T-cell (primary cell): ENCODE measurements at regions of chr13 and their contacts with region 1.

Region 1: GRCh38 chr13:77374786-77375185 is 47.9 kb upstream of the MYCBP2 start:
- DNase-seq: no peak
- ATAC-seq: no peak
- H3K4me3 ChIP-seq: no peak overlapping the region
- H3K4me3 Mint-ChIP-seq: no peak overlapping the region
- H3K27ac ChIP-seq: no peak overlapping the region
- H3K27ac Mint-ChIP-seq: no peak overlapping the region
- H3K4me1 ChIP-seq: no peaks in the 10 kb centered on the region
- H3K4me1 Mint-ChIP-seq: peaks cover 0 to 5% (median 4%) of the 10 kb centered on the region in 3 donors
- H3K27me3 ChIP-seq: no peaks in the 10 kb centered on the region
- H3K27me3 Mint-ChIP-seq: no peaks in the 10 kb centered on the region

Region 2: DNA sequence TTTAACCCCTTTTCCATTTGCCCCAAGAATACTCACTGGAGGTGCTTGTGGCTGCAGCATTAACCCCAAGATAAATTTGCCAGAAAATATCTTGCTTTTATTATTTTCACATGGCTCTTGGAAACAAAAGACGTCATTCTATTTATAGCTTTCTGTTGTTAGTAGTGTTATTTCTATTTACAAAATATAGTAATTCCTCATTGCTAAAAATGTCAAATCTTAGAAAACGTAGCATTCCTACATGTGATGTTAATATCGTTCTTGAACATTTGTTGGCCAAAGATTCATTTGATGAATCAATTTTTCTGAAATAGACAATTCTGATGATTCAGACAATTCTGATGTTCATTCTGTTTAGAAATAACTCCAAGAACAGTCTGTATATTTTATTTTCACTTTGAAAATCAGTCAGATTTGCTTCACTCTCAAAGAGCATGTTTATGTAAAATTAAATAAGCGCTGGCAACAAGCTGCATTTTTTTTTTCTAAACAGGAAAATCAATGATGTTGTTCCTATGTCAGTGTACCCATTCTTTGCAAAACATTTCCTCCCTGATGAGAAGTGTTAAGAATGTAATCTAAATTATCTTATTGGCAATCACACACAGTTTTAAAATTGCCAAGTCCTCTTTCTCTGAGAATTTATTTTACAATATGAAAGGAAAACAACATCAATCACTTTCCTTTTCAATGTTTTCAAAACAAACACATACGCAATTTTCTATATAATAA is 822.6 kb before region 1 on chr13:
- CTCF ChIA-PET with region 1: no interaction called
- POLR2A ChIA-PET with region 1: no interaction called
- DNase-seq: no peak
- ATAC-seq: no peak
- H3K4me3 ChIP-seq: no peak overlapping the region
- H3K4me3 Mint-ChIP-seq: no peak overlapping the region
- H3K27ac ChIP-seq: no peak overlapping the region
- H3K27ac Mint-ChIP-seq: no peak overlapping the region
- H3K4me1 ChIP-seq: no peaks in the 10 kb centered on the region
- H3K4me1 Mint-ChIP-seq: no peaks in the 10 kb centered on the region
- H3K27me3 ChIP-seq: no peaks in the 10 kb centered on the region
- H3K27me3 Mint-ChIP-seq: peaks cover 3 to 6% of the 10 kb centered on the region in 2 donors

Region 3: DNA sequence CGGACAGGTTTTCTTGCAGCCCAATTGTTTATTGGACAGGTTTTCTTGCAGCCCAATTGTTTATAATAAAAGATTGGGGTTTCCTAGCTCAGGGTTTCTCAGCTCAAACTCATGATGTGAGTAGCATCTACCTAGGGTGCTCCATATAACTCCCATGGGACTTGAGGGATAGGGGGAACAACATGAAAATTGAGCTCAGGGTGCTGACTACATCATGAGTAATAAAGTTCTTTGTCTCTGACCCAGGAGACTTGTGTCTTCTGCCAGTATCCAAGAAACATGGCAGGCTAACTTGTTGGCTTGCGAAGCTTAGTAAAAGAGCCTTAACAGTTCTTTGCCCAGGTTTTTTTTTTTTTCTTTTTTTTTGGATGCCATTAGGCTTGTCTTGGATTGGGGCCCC is 11.3 kb after region 1 on chr13:
- CTCF ChIA-PET with region 1: interaction called in 1 of 2 experiments, 3 read pairs
- POLR2A ChIA-PET with region 1: interaction called, 4 to 10 read pairs
- DNase-seq: no peak
- ATAC-seq: no peak
- H3K4me3 ChIP-seq: no peak overlapping the region
- H3K4me3 Mint-ChIP-seq: no peak overlapping the region
- H3K27ac ChIP-seq: no peak overlapping the region
- H3K27ac Mint-ChIP-seq: no peak overlapping the region
- H3K4me1 ChIP-seq: no peaks in the 10 kb centered on the region
- H3K4me1 Mint-ChIP-seq: peaks cover 4 to 8% (median 6%) of the 10 kb centered on the region in 3 donors
- H3K27me3 ChIP-seq: no peaks in the 10 kb centered on the region
- H3K27me3 Mint-ChIP-seq: no peaks in the 10 kb centered on the region